ENCODE measurements at regions of chr2 and their contacts with region 1.

Region 1: DNA sequence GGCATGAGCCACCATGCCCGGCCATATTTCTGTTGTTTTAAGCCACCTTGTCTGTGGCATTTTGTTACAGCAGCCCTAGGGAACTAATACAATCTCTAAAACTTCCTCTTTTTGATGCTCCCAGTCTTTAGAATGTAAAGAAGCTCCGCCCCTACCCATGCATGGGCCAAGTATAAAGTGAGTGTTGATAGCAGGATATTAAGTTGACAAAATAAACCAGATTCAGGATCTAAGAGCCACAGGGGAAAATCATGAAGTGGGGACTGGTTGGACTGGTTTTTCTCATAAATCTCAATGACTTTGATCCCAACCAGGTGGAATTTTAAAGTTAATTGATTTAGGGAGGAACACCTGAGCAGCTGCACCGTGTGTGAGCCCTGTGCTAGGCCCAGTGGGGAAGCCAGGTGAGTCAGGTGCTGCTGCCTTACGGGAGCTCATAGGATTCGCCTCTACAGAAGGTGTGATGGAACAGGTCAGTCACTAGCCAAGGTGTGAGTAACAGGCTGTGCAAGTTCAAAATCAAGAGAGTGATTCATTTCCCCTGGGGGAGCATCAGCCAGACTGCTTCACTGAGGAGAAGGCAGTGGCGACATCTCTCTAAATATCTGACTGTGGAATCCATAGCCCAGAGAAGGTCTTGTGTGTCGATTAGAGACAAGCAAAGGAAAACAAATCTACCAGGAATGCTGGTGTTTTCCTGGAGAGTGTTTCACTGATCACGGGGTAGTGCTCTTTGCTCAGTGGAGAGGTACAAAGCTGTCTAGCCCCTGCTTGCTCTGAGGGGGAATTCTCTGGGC is 63.0 kb upstream of the MSH2 start:
- DNase-seq: no peak
- ATAC-seq: no peak
- H3K4me3 ChIP-seq: no peak overlapping the region
- H3K27ac ChIP-seq: no peak overlapping the region
- H3K4me1 ChIP-seq: peaks cover 18% of the 10 kb centered on the region
- H3K27me3 ChIP-seq: peaks cover 0 to under 1% of the 10 kb centered on the region in 2 experiments; a peak in 1 of 4 replicates
- CTCF ChIP-seq: no peak
- EP300 ChIP-seq: no peak
- POLR2A ChIP-seq: no peak
- RAD21 ChIP-seq: no peak

Region 2: DNA sequence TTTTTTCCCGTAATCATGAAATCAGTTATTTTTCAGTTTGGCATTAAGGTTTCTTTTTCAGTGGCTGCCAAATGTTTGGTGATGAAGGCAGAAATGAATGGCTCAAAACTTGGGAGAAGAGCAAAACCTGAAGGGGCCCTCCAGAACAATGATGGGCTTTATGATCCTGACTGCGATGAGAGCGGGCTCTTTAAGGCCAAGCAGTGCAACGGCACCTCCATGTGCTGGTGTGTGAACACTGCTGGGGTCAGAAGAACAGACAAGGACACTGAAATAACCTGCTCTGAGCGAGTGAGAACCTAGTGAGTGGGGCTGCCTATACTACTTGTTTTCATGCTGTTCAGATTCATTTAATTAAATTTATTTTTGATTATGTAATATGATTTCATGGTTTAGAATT is 33.8 kb after region 1 on chr2:
- CTCF ChIA-PET with region 1: interaction called, 18 read pairs
- POLR2A ChIA-PET with region 1: interaction called, 3 read pairs
- RAD21 ChIA-PET with region 1: interaction called, 3 read pairs
- SMC1A ChIA-PET with region 1: interaction called, 16 read pairs
- in situ Hi-C with region 1: no loop called
- intact Hi-C with region 1: no loop called
- DNase-seq: no peak
- ATAC-seq: peak; percentile 19; the same call in 1 of the 3 replicates
- H3K4me3 ChIP-seq: no peak overlapping the region
- H3K27ac ChIP-seq: no peak overlapping the region
- H3K4me1 ChIP-seq: no peaks in the 10 kb centered on the region
- H3K27me3 ChIP-seq: peaks cover 0 to 3% of the 10 kb centered on the region in 2 experiments; a peak in 2 of 4 replicates
- CTCF ChIP-seq: no peak
- EP300 ChIP-seq: no peak
- POLR2A ChIP-seq: no peak
- RAD21 ChIP-seq: no peak

Region 3: GRCh38 chr2:47386551-47386950 is 46.6 kb after region 1 on chr2:
- CTCF ChIA-PET with region 1: interaction called, 273 read pairs
- POLR2A ChIA-PET with region 1: interaction called, 7 read pairs
- RAD21 ChIA-PET with region 1: interaction called, 136 read pairs
- SMC1A ChIA-PET with region 1: interaction called, 106 read pairs
- in situ Hi-C with region 1: loop called (anchors 5 kb)
- intact Hi-C with region 1: loop called (anchors 1 kb)
- DNase-seq: no peak
- ATAC-seq: peak; percentile 61
- H3K4me3 ChIP-seq: no peak overlapping the region
- H3K27ac ChIP-seq: no peak overlapping the region
- H3K4me1 ChIP-seq: peaks cover 3% of the 10 kb centered on the region; the same call in 1 of the 2 replicates
- H3K27me3 ChIP-seq: peaks cover 0 to 3% of the 10 kb centered on the region in 2 experiments; a peak in 1 of 4 replicates
- CTCF ChIP-seq: no peak
- EP300 ChIP-seq: no peak
- POLR2A ChIP-seq: no peak
- RAD21 ChIP-seq: no peak

Region 4: DNA sequence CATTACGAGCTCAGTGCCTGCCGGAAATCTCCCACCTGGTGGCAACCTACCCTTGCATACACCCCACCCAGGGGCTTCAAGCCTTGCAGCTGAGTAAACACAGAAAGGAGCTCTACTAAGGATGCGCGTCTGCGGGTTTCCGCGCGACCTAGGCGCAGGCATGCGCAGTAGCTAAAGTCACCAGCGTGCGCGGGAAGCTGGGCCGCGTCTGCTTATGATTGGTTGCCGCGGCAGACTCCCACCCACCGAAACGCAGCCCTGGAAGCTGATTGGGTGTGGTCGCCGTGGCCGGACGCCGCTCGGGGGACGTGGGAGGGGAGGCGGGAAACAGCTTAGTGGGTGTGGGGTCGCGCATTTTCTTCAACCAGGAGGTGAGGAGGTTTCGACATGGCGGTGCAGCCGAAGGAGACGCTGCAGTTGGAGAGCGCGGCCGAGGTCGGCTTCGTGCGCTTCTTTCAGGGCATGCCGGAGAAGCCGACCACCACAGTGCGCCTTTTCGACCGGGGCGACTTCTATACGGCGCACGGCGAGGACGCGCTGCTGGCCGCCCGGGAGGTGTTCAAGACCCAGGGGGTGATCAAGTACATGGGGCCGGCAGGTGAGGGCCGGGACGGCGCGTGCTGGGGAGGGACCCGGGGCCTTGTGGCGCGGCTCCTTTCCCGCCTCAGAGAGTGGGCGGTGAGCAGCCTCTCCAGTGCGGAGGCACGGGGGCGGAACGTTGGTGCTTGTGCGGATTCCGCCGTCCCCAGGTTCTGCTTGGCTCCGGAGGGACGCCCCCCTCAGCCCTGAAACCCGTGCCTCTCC is 63.1 kb after region 1 on chr2 and contains the start of gene MSH2:
- CTCF ChIA-PET with region 1: interaction called, 13 read pairs
- POLR2A ChIA-PET with region 1: no interaction called
- RAD21 ChIA-PET with region 1: interaction called, 11 read pairs
- SMC1A ChIA-PET with region 1: interaction called, 8 read pairs
- in situ Hi-C with region 1: no loop called
- intact Hi-C with region 1: no loop called
- DNase-seq: peak; percentile 86
- ATAC-seq: peak; percentile 97
- H3K4me3 ChIP-seq: peak within 1 kb of the TSS; percentile 83
- H3K27ac ChIP-seq: peak within 1 kb of the TSS; percentile 85
- H3K4me1 ChIP-seq: peaks cover 6% of the 10 kb centered on the region
- H3K27me3 ChIP-seq: no peaks in the 10 kb centered on the region; a peak in 1 of 4 replicates
- CTCF ChIP-seq: no peak
- EP300 ChIP-seq: 0 out of 4 replicates have a peak, but pooled peaks of 1 of the 2 experiments have one; percentile 17
- POLR2A ChIP-seq: peak; percentile 88
- RAD21 ChIP-seq: no peak
- polyA plus RNA-seq, gene MSH2: 24.3 to 31.3 TPM

Region 5: DNA sequence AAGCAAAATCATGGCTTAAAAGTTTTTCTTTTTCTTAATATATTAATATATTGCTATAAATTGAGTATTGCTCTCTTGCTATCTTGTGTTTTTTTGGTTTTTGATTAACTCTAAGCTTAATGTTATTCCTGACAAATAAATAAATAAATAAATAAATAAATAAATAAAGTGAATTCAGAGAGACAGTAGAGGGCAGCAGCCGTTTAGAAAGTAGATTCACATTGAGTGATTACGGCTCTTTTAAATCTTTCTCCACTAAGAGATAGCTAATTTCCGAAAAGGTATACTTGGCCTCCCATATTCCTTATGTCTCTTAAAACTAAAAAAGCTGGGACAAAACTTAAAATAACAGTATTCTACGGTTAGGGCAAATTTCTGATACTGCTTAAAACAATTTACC is 97.3 kb after region 1 on chr2:
- CTCF ChIA-PET with region 1: interaction called, 10 read pairs
- POLR2A ChIA-PET with region 1: no interaction called
- RAD21 ChIA-PET with region 1: interaction called, 4 read pairs
- SMC1A ChIA-PET with region 1: no interaction called
- in situ Hi-C with region 1: no loop called
- intact Hi-C with region 1: no loop called
- DNase-seq: no peak
- ATAC-seq: peak; percentile 27; the same call in 1 of the 3 replicates
- H3K4me3 ChIP-seq: no peak overlapping the region
- H3K27ac ChIP-seq: no peak overlapping the region
- H3K4me1 ChIP-seq: no peaks in the 10 kb centered on the region
- H3K27me3 ChIP-seq: no peaks in the 10 kb centered on the region
- CTCF ChIP-seq: peak; percentile 14 to 37 (median 28); a peak in 4 of 6 replicates
- EP300 ChIP-seq: no peak
- POLR2A ChIP-seq: no peak
- RAD21 ChIP-seq: peak; percentile 69

Region 6: GRCh38 chr2:48107326-48107925 is 767.5 kb after region 1 on chr2:
- CTCF ChIA-PET with region 1: interaction called, 4 read pairs
- POLR2A ChIA-PET with region 1: no interaction called
- RAD21 ChIA-PET with region 1: interaction called, 6 read pairs
- SMC1A ChIA-PET with region 1: interaction called, 6 read pairs
- in situ Hi-C with region 1: no loop called
- intact Hi-C with region 1: loop called (anchors 10 kb)
- DNase-seq: no peak
- ATAC-seq: no peak
- H3K4me3 ChIP-seq: no peak overlapping the region
- H3K27ac ChIP-seq: no peak overlapping the region
- H3K4me1 ChIP-seq: peaks cover 8% of the 10 kb centered on the region
- H3K27me3 ChIP-seq: no peaks in the 10 kb centered on the region
- CTCF ChIP-seq: no peak
- EP300 ChIP-seq: no peak
- POLR2A ChIP-seq: no peak
- RAD21 ChIP-seq: no peak